ENCODE measurements at regions of chr6 and their contacts with region 1.

Region 1: DNA sequence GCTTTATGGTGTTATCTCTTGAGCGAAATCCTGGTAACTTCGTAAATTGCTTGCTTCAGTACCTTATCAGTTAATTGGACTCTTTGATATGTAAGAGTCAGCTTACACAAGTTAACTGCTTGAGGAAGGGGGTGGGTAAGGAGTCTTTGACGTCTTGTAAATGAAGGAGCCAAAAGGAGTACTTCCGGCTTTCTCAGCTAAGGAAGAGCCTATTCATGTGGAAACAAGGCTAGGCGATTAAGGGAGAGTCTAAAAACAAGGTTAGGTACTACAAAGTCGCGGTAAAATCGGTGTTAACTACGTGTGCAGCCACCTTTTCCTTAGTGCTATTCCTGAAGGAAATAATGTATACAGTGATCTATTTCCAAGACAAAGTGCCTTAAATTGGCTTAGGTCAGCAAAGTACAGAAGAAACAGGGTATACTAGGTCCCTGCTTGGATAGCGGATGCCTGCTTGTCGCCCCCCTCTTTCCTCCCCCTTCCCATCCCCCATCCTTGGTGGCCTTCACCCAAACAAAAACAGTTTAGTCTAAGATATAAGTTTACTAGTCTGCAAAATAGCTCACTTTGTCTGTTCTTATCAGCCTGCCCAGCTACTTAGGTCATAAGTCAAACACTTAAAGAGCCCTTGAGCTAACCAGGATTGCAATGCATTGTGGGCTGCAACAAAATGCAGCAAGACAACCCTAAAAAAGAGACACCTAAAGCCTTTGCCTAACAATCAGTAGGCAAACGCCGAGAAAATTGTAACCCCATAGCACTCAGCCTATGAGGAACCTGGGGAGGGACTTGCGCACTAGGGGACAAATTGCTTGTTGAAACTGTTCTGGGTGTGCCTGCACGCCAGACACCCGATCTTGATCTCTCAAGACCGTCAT is 147.3 kb downstream of the TRIM27 start:
- DNase-seq: no peak
- ATAC-seq: no peak
- H3K4me3 ChIP-seq: no peak overlapping the region
- H3K4me3 Mint-ChIP-seq: no peak overlapping the region
- H3K27ac ChIP-seq: no peak overlapping the region
- H3K27ac Mint-ChIP-seq: no peak overlapping the region
- H3K4me1 ChIP-seq: no peaks in the 10 kb centered on the region
- H3K4me1 Mint-ChIP-seq: peaks cover 9% of the 10 kb centered on the region
- H3K27me3 ChIP-seq: peaks cover 64 to 68% of the 10 kb centered on the region in 2 experiments
- H3K27me3 Mint-ChIP-seq: peaks cover 88% of the 10 kb centered on the region
- CTCF ChIP-seq: no peak

Region 2: DNA sequence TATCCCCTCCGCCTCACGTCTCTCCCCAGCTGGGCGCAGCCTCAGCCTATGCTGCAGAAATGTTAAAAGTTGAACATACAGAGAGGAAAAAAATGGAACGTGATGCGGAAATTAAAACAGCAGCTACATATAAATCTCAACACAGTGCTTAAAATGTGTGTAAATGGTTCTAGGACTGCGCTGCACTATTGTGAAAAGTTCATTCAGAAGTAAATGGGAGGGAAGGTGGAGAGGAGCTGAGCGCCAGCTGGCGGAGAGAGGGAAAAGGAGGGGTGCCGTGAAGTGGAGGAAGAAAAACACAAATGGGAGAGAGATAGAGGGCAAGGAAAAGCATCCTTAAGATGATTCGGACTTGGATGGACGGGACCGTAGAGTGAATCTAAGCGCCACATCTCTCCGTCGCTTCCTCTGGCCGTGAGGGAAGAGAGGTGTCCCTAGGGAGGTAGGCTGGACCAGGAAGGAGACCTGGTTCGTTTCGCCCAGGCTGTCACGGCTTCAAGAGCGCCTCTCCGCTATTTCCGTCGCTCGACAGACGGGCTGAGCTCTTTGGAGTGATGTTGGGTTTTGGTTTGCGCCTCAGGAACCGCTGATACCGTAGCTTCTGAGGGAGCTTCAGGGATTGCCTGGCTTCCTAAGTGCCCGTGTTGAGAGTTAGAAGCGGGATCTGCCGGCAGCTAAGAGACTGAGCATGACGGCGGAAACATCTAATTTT is 33.6 kb after region 1 on chr6:
- CTCF ChIA-PET with region 1: no interaction called
- POLR2A ChIA-PET with region 1: no interaction called
- intact Hi-C with region 1: loop called in 1 of 2 experiments (anchors 5 kb)
- DNase-seq: peak in 1 of 9 experiments; percentile 20
- ATAC-seq: no peak
- H3K4me3 ChIP-seq: no peak overlapping the region
- H3K4me3 Mint-ChIP-seq: no peak overlapping the region
- H3K27ac ChIP-seq: no peak overlapping the region
- H3K27ac Mint-ChIP-seq: no peak overlapping the region
- H3K4me1 ChIP-seq: no peaks in the 10 kb centered on the region
- H3K4me1 Mint-ChIP-seq: peaks cover 10% of the 10 kb centered on the region
- H3K27me3 ChIP-seq: peaks cover 68 to 76% of the 10 kb centered on the region in 2 experiments
- H3K27me3 Mint-ChIP-seq: peaks cover 84% of the 10 kb centered on the region
- CTCF ChIP-seq: no peak

Region 3: GRCh38 chr6:28953039-28953584 is 176.6 kb after region 1 on chr6:
- CTCF ChIA-PET with region 1: no interaction called
- POLR2A ChIA-PET with region 1: no interaction called
- intact Hi-C with region 1: no loop called
- DNase-seq: peak in 8 of 9 experiments; percentile 20 to 75 (median 53)
- ATAC-seq: peak; percentile 72
- H3K4me3 ChIP-seq: peak overlapping the region; percentile 43 to 45
- H3K4me3 Mint-ChIP-seq: peak overlapping the region; percentile 86
- H3K27ac ChIP-seq: no peak overlapping the region
- H3K27ac Mint-ChIP-seq: peak overlapping the region; percentile 29
- H3K4me1 ChIP-seq: peaks cover 14% of the 10 kb centered on the region
- H3K4me1 Mint-ChIP-seq: peaks cover 16% of the 10 kb centered on the region
- H3K27me3 ChIP-seq: no peaks in the 10 kb centered on the region
- H3K27me3 Mint-ChIP-seq: peaks cover 7% of the 10 kb centered on the region
- CTCF ChIP-seq: no peak

Measured in CD8-positive, alpha-beta T cell (primary cell).